ENCODE measurements at regions of chr22 and their contacts with region 1.

Region 1: DNA sequence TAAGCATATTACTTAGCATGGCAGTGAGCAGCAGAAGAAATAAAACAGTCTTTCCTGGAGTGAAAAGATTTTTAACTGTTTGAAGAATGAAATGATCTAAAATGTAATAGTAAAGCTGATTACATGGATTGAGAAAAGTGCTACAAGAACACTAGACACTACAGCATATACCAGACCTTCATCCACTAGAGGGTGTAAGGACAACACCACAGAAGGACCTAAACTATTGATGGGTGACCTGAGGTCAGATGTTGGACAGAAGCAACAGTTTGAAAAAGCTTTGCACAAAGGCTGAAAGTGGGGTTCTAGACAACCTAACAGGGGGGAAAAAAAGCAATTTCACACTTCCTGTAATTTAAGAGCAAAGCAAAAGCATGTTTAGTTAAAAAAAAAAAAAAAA is 97.7 kb downstream of the RBFOX2 start:
- DNase-seq: peak; percentile 28
- H3K4me3 Mint-ChIP-seq: no peak overlapping the region
- H3K27ac Mint-ChIP-seq: no peak overlapping the region
- H3K4me1 Mint-ChIP-seq: no peaks in the 10 kb centered on the region
- H3K27me3 Mint-ChIP-seq: no peaks in the 10 kb centered on the region
- CTCF ChIP-seq: peak; percentile 50

Region 2: DNA sequence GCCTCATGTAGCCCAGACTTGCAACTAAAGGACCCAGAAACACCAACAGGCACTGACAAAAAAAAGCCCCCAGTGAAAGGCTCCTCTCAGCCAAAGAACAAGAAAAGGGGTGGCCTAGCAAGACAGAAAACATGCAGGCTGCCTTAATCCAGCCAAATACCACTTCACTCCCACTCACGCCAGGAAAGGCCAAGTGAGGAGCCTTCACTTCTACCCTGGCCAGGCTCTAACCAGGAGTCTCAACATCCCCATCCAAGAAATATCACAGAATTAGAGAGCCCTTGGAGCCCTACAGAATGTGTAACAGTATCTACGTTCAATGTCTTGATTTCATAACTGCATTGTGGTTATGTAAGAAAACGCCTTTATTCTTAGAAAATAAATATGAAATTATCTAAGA is 64.3 kb before region 1 on chr22:
- CTCF ChIA-PET with region 1: no interaction called
- intact Hi-C with region 1: no loop called
- DNase-seq: no peak
- H3K4me3 Mint-ChIP-seq: no peak overlapping the region
- H3K27ac Mint-ChIP-seq: no peak overlapping the region
- H3K4me1 Mint-ChIP-seq: peaks cover 23% of the 10 kb centered on the region
- H3K27me3 Mint-ChIP-seq: no peaks in the 10 kb centered on the region
- CTCF ChIP-seq: no peak

Region 3: GRCh38 chr22:35977136-35977535 is 46.2 kb after region 1 on chr22:
- CTCF ChIA-PET with region 1: no interaction called
- intact Hi-C with region 1: no loop called
- DNase-seq: no peak
- H3K4me3 Mint-ChIP-seq: no peak overlapping the region
- H3K27ac Mint-ChIP-seq: no peak overlapping the region
- H3K4me1 Mint-ChIP-seq: peaks cover 18% of the 10 kb centered on the region
- H3K27me3 Mint-ChIP-seq: no peaks in the 10 kb centered on the region
- CTCF ChIP-seq: no peak

Region 4: GRCh38 chr22:36009085-36009484 is 78.2 kb after region 1 on chr22:
- CTCF ChIA-PET with region 1: no interaction called
- intact Hi-C with region 1: loop called (anchors 5 kb)
- DNase-seq: no peak
- H3K4me3 Mint-ChIP-seq: no peak overlapping the region
- H3K27ac Mint-ChIP-seq: peak overlapping the region; percentile 47
- H3K4me1 Mint-ChIP-seq: peaks cover 48% of the 10 kb centered on the region
- H3K27me3 Mint-ChIP-seq: no peaks in the 10 kb centered on the region
- CTCF ChIP-seq: no peak

Region 5: GRCh38 chr22:36123673-36124630 is 193.0 kb after region 1 on chr22:
- CTCF ChIA-PET with region 1: interaction called, 10 read pairs
- intact Hi-C with region 1: loop called (anchors 1 kb)
- DNase-seq: peak; percentile 93
- H3K4me3 Mint-ChIP-seq: peak overlapping the region; percentile 67
- H3K27ac Mint-ChIP-seq: peak overlapping the region; percentile 77
- H3K4me1 Mint-ChIP-seq: no peaks in the 10 kb centered on the region
- H3K27me3 Mint-ChIP-seq: peaks cover 31% of the 10 kb centered on the region
- CTCF ChIP-seq: peak; percentile 97

Region 6: DNA sequence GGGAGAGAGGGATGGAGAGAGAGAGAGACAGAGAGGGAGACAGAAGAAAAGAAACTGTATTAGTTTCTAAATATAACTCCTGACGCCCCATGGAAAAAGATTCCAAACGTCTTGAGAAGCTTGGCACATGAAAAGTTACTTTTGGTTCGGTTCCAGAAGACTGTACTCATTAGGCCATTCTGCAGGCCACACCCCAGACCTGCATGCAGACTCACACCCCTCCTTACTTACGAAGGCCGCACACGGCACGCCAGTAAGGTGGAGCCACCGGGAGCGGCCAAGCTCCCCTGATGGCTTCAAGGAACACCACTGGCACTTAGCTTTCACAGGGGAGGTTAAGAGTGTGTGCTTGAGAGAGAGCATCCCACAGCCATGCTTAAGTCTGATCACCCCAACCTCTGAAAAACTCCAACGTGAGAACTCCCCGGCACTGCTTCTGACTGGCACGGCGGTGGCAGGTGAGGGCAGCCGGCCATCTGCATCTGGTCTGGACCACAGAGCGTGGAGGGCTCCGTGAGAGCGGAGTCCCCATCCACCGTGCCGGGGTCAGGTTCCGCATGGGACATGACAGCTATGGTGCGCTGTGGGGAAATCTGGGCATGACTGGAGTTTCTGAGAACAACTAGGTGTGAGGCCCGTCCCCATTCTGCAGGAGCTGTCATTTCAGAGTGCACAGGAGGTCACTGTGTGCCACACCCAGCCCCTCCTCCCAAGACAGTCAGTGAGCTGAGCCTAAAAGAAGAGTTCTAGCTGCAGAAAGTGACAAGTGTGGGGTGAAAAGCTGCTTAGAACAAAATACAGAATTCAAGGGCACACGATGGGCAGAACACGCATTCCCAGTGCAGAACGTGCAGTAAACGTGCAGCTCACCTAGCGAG is 394.5 kb after region 1 on chr22:
- CTCF ChIA-PET with region 1: no interaction called
- intact Hi-C with region 1: no loop called
- DNase-seq: no peak
- H3K4me3 Mint-ChIP-seq: no peak overlapping the region
- H3K27ac Mint-ChIP-seq: no peak overlapping the region
- H3K4me1 Mint-ChIP-seq: peaks cover 22% of the 10 kb centered on the region
- H3K27me3 Mint-ChIP-seq: no peaks in the 10 kb centered on the region
- CTCF ChIP-seq: no peak

Measured in Calu3 (cell line).